WTC11 (cell line): ENCODE measurements at regions of chr5 and their contacts with region 1.

Region 1: DNA sequence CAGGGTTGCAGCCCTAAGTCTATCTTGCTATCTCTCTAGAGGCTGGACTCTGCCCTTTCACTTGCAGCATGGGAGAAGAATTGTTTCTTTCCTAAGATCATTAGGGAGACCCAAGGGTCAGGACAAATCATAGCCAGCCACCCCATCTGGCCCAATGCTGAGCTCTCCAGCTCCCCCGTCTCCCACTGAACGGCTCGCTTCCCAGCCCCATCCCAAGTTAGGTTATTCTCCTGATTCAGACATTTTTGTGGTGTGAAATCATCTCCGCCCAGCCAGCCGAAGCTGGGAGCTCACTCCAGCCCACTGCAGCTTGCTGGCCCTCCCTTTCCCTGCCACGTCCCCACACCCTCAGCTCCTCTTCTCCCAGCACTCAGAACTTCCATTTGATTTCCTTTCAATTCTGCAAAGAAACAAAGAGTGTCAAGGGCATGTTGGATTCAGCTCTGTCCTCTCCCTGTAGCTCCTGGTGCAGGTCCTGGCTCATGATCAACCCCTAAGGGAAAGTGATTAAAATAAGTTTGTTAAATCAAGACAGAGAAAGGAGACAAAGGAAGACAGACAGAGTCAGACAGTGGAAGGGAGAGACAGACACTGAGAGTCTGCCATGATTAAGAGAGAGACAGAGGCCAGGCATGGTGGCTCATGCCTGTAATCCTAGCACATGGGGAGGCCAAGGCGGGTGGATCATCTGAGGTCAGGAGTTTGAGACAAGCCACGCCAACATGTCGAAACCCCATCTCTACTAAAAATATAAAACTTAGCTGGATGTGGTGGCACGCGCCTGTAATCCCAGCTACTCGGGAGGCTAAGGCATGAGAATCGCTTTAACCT is 12.6 kb upstream of the SPARC start:
- DNase-seq: no peak
- ATAC-seq: peak; percentile 20
- H3K4me3 Mint-ChIP-seq: no peak overlapping the region
- H3K27ac Mint-ChIP-seq: peak overlapping the region; percentile 19; the same call in 1 of the 2 replicates
- H3K4me1 Mint-ChIP-seq: peaks cover 28% of the 10 kb centered on the region
- H3K27me3 Mint-ChIP-seq: no peaks in the 10 kb centered on the region; the same call in 1 of the 2 replicates
- CTCF ChIP-seq: no peak

Region 2: GRCh38 chr5:151686674-151687407 is 12.4 kb before region 1 on chr5 and contains the start of gene SPARC:
- CTCF ChIA-PET with region 1: interaction called, 13 read pairs
- POLR2A ChIA-PET with region 1: interaction called, 15 read pairs
- DNase-seq: peak; percentile 78
- ATAC-seq: peak; percentile 93
- H3K4me3 Mint-ChIP-seq: peak within 1 kb of the TSS; percentile 87
- H3K27ac Mint-ChIP-seq: peak within 1 kb of the TSS; percentile 84
- H3K4me1 Mint-ChIP-seq: peaks cover 41% of the 10 kb centered on the region
- H3K27me3 Mint-ChIP-seq: no peaks in the 10 kb centered on the region
- CTCF ChIP-seq: no peak
- total RNA-seq, gene SPARC: 357 to 418 TPM (median 358 TPM) in 3 replicates